ENCODE measurements at regions of chr13 and their contacts with region 1.

Region 1: DNA sequence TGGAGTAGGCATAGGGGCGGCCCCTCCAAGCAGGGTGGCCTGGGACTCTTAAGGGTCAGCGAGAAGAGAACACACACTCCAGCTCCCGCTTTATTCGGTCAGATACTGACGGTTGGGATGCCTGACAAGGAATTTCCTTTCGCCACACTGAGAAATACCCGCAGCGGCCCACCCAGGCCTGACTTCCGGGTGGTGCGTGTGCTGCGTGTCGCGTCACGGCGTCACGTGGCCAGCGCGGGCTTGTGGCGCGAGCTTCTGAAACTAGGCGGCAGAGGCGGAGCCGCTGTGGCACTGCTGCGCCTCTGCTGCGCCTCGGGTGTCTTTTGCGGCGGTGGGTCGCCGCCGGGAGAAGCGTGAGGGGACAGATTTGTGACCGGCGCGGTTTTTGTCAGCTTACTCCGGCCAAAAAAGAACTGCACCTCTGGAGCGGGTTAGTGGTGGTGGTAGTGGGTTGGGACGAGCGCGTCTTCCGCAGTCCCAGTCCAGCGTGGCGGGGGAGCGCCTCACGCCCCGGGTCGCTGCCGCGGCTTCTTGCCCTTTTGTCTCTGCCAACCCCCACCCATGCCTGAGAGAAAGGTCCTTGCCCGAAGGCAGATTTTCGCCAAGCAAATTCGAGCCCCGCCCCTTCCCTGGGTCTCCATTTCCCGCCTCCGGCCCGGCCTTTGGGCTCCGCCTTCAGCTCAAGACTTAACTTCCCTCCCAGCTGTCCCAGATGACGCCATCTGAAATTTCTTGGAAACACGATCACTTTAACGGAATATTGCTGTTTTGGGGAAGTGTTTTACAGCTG is at the starts of genes BRCA2 and ZAR1L:
- DNase-seq: peak; percentile 93
- ATAC-seq: peak; percentile 92
- H3K4me3 Mint-ChIP-seq: peak within 1 kb of the TSS; percentile 89
- H3K27ac Mint-ChIP-seq: peak within 1 kb of the TSS; percentile 99
- H3K4me1 Mint-ChIP-seq: peaks cover 41% of the 10 kb centered on the region
- H3K27me3 Mint-ChIP-seq: no peaks in the 10 kb centered on the region
- total RNA-seq, gene BRCA2: 28.4 to 30.7 TPM
- total RNA-seq, gene ZAR1L: not detected

Region 2: GRCh38 chr13:32267836-32268439 is 47.5 kb before region 1 on chr13:
- CTCF ChIA-PET with region 1: interaction called, 11 read pairs
- POLR2A ChIA-PET with region 1: interaction called, 5 read pairs
- DNase-seq: peak; percentile 65
- ATAC-seq: peak; percentile 92
- H3K4me3 Mint-ChIP-seq: no peak overlapping the region
- H3K27ac Mint-ChIP-seq: no peak overlapping the region
- H3K4me1 Mint-ChIP-seq: no peaks in the 10 kb centered on the region
- H3K27me3 Mint-ChIP-seq: no peaks in the 10 kb centered on the region

Region 3: DNA sequence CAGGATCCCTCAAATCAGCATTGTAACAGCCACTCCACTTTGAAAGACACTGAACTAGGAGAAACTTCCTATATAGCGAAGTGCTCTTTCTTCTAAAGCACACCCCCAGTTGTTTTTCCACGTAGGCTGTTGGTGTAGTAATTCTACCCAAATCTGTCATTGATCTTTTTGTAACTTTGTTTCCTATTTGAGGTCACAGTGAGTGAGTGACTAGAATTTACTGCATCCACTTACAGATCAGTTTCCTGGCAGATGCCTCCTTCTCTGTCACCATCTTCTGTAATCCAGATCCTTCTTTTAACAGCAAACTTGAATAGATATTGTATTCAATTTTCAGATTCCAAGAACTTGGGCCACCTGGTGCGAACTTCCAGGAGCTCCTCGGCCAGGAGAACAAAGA is 15.5 kb before region 1 on chr13:
- CTCF ChIA-PET with region 1: no interaction called
- POLR2A ChIA-PET with region 1: interaction called, 12 read pairs
- DNase-seq: no peak
- ATAC-seq: no peak
- H3K4me3 Mint-ChIP-seq: no peak overlapping the region
- H3K27ac Mint-ChIP-seq: no peak overlapping the region
- H3K4me1 Mint-ChIP-seq: peaks cover 6% of the 10 kb centered on the region
- H3K27me3 Mint-ChIP-seq: peaks cover 29% of the 10 kb centered on the region

Region 4: GRCh38 chr13:32538621-32539246 is 223.3 kb after region 1 on chr13 and contains the start of gene N4BP2L2:
- CTCF ChIA-PET with region 1: no interaction called
- POLR2A ChIA-PET with region 1: interaction called, 12 read pairs
- DNase-seq: peak; percentile 95
- ATAC-seq: peak; percentile 98
- H3K4me3 Mint-ChIP-seq: peak within 1 kb of the TSS; percentile 97
- H3K27ac Mint-ChIP-seq: peak within 1 kb of the TSS; percentile 98
- H3K4me1 Mint-ChIP-seq: peaks cover 41% of the 10 kb centered on the region
- H3K27me3 Mint-ChIP-seq: no peaks in the 10 kb centered on the region
- total RNA-seq, gene N4BP2L2: 97.1 to 111 TPM

Measured in activated CD8-positive, alpha-beta T cell treated with anti-CD3 and anti-CD28 coated beads, Interleukin-2, amount 10 ng/mL, durations not matched to agents 7 days and 5 days (primary cell).